Aorta (tissue), 5 donors: ENCODE measurements at regions of chr17 and their contacts with region 1.

Region 1: GRCh38 chr17:12789777-12790609 is 695 bp downstream of the ARHGAP44 start:
- DNase-seq: peak in 1 of 2 donors; percentile 75
- ATAC-seq: peak; percentile 42
- H3K4me3 ChIP-seq: peak overlapping the region; percentile 86 to 88
- H3K27ac ChIP-seq: no peak overlapping the region
- H3K4me1 ChIP-seq: no peaks in the 10 kb centered on the region
- H3K27me3 ChIP-seq: no peaks in the 10 kb centered on the region

Region 2: DNA sequence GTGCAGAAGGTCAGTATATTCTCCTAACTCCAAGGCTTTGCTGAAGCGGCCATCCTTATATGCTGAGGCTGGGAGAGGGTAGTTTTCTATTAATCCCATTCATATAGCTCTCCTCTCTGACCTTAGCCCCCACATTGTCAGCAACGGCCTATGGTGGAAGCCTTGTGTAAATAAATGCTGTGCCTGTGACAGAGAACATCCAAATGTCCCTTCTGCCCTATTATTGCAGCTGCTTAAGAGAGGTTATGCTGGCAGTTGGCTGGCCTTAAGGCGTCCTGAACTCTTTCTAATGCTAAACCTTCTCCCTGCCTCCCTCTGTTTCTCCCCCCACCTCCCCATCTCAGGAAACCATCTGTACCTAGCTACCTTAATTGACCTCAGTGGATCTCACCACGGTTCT is 52.9 kb after region 1 on chr17:
- intact Hi-C with region 1: loop called in 1 of 2 experiments (anchors 5 kb)
- DNase-seq: no peak
- ATAC-seq: no peak
- H3K4me3 ChIP-seq: no peak overlapping the region
- H3K27ac ChIP-seq: no peak overlapping the region
- H3K4me1 ChIP-seq: no peaks in the 10 kb centered on the region
- H3K27me3 ChIP-seq: no peaks in the 10 kb centered on the region